K562 (cell line): ENCODE measurements at regions of chr22 and their contacts with region 1.

Region 1: DNA sequence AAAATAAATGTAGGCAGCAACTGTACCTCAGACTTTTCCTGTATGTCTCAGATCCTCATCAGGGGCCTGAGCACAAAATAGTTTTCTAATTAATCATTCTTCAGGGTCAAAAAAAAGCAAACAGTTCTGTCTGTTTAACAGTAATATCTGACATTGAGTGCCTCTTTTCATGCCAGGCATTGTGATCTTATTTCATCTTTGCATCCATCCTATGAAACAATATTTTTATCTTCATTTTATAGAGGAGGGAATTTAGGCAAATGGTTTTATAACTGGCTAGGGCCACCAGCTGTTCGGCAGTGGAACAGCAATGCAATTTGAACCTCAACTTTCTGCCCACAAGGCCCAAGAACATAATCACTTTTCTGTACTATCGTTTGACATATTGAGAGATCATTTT is 145.6 kb downstream of the WNT7B start:
- DNase-seq: no peak
- ATAC-seq: no peak
- H3K4me3 ChIP-seq: no peak overlapping the region
- H3K27ac ChIP-seq: no peak overlapping the region
- H3K4me1 ChIP-seq: no peaks in the 10 kb centered on the region
- H3K27me3 ChIP-seq: no peaks in the 10 kb centered on the region
- CTCF ChIP-seq: peak in 1 of 3 experiments; percentile 20; a peak in 1 of 6 replicates
- EP300 ChIP-seq: no peak
- POLR2A ChIP-seq: no peak
- RAD21 ChIP-seq: no peak

Region 2: GRCh38 chr22:45645526-45646414 is 185.6 kb before region 1 on chr22:
- CTCF ChIA-PET with region 1: interaction called, 3 read pairs
- POLR2A ChIA-PET with region 1: no interaction called
- in situ Hi-C with region 1: loop called (anchors 10 kb)
- intact Hi-C with region 1: loop called (anchors 5 kb)
- DNase-seq: peak; percentile 69 to 78 (median 74)
- ATAC-seq: peak; percentile 99
- H3K4me3 ChIP-seq: no peak overlapping the region
- H3K27ac ChIP-seq: no peak overlapping the region
- H3K4me1 ChIP-seq: peaks cover 0 to 23% of the 10 kb centered on the region in 2 experiments; a peak in 3 of 5 replicates
- H3K27me3 ChIP-seq: peaks cover 0 to 48% of the 10 kb centered on the region in 2 experiments
- CTCF ChIP-seq: peak; percentile 65 to 83 (median 69)
- EP300 ChIP-seq: no peak
- POLR2A ChIP-seq: no peak
- RAD21 ChIP-seq: peak; percentile 61 to 85

Region 3: GRCh38 chr22:46147501-46148267 is 316.3 kb after region 1 on chr22:
- CTCF ChIA-PET with region 1: no interaction called
- POLR2A ChIA-PET with region 1: no interaction called
- in situ Hi-C with region 1: no loop called
- intact Hi-C with region 1: no loop called
- DNase-seq: no peak
- ATAC-seq: no peak
- H3K4me3 ChIP-seq: no peak overlapping the region
- H3K27ac ChIP-seq: no peak overlapping the region
- H3K4me1 ChIP-seq: peaks cover 6 to 32% of the 10 kb centered on the region in 2 experiments; a peak in 4 of 5 replicates
- H3K27me3 ChIP-seq: peaks cover 9 to 47% of the 10 kb centered on the region in 2 experiments; a peak in 4 of 5 replicates
- CTCF ChIP-seq: no peak
- EP300 ChIP-seq: no peak
- POLR2A ChIP-seq: no peak
- RAD21 ChIP-seq: no peak